Aorta (tissue), 5 donors: ENCODE measurements at regions of chr2 and their contacts with region 1.

Region 1: GRCh38 chr2:47906157-47907038 is at the start of gene FBXO11:
- DNase-seq: peak; percentile 96 to 98
- ATAC-seq: peak; percentile 96
- H3K4me3 ChIP-seq: peak within 1 kb of the TSS; percentile 98 to 99
- H3K27ac ChIP-seq: peak within 1 kb of the TSS; percentile 80 to 99
- H3K4me1 ChIP-seq: no peaks in the 10 kb centered on the region
- H3K27me3 ChIP-seq: no peaks in the 10 kb centered on the region
- total RNA-seq, gene FBXO11: 64.8 to 80.4 TPM

Region 2: DNA sequence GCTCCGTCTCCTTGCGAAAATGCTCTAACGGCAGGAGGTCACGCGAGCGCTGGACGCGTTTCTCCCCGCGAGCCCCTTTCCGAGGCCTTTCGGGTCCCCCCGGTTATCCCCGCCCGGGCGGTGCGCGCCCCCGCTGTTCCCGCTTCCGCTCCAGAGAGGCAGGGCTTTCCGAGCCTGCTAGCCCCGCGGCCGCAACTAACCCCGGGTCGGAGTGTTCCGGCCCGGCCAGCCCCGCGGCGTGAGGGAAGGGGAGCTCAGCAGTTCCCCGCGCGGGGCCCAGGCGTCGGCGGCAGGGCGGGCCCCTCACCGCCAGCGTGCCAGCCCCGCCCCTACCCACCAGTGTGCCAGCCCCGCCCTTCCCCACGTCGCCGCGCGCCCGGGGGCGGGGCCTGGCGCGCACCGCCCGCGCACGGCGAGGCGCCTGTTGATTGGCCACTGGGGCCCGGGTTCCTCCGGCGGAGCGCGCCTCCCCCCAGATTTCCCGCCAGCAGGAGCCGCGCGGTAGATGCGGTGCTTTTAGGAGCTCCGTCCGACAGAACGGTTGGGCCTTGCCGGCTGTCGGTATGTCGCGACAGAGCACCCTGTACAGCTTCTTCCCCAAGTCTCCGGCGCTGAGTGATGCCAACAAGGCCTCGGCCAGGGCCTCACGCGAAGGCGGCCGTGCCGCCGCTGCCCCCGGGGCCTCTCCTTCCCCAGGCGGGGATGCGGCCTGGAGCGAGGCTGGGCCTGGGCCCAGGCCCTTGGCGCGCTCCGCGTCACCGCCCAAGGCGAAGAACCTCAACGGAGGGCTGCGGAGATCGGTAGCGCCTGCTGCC is 123.5 kb before region 1 on chr2 and contains the start of gene MSH6:
- intact Hi-C with region 1: loop called (anchors 5 to 10 kb)
- DNase-seq: peak; percentile 93 to 96
- ATAC-seq: peak; percentile 97
- H3K4me3 ChIP-seq: peak within 1 kb of the TSS; percentile 73 to 87
- H3K27ac ChIP-seq: peak within 1 kb of the TSS in 1 of 2 donors; percentile 78
- H3K4me1 ChIP-seq: no peaks in the 10 kb centered on the region
- H3K27me3 ChIP-seq: no peaks in the 10 kb centered on the region
- total RNA-seq, gene MSH6: 29.4 to 38.3 TPM

Region 3: DNA sequence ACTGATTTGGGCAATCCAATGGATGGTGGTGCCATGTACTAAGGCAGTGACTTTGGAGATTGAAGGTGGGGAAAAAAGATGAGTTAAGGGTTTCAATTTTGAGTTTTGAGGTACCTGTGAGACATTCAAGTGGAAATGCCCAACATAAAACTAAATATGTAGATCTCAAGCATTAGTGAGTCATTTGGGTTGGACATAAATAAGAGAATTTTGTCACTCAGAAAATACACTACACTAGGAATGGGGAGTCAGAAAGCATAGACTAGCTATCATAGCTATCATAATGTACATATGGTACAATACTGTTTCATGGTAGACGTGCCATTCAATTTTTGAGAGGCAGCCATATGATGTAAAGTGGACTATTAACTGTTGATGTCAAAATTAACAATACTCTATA is 56.2 kb before region 1 on chr2:
- intact Hi-C with region 1: loop called in 1 of 2 experiments (anchors 10 kb)
- DNase-seq: no peak
- ATAC-seq: no peak
- H3K4me3 ChIP-seq: no peak overlapping the region
- H3K27ac ChIP-seq: no peak overlapping the region
- H3K4me1 ChIP-seq: no peaks in the 10 kb centered on the region
- H3K27me3 ChIP-seq: no peaks in the 10 kb centered on the region

Region 4: DNA sequence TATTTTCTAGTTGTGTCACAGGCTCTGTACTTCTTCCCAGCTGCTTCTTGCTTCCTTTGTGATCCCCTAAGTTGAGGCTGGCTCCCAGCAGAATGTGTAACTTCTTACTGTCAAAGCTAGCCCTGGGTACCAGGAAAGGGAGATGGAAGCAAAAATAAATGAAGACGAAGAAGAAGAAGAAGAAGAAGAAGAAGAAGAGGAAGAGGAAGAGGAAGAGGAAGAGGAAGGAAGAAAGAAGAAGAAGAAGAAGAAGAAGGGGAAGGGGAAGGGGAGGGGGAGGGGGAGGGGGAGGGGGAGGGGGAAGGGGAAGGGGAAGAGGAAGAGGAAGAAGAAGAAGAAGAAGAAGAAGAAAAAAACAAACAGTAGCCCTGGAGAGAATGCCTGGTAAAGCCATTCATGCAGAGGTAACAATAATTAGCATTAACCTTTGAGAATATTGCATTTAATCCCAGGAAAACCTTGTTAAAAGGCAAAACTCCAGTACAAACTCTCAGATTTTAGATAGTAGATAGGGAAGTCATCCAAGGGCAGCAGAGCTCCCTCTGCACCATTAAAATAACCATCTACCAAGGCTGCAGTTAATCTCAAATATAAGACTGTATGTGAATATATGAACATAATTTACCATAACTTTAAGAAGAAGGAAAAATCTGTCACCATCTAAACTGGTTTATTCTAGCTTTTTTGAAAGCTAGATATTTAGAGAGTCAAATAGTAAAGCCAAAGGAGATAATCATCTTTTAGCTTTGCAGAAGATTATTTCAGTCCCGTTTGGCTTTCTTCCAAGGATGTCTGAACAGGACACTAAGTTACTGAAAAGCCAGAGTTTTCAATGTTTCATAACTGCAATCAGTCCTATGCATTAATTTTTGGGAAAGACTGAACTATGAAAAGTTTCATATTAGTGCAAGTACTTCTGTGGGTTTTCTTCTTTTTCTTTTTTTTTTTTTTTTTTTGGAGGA is 44.2 kb after region 1 on chr2:
- intact Hi-C with region 1: no loop called
- DNase-seq: no peak
- ATAC-seq: no peak
- H3K4me3 ChIP-seq: no peak overlapping the region
- H3K27ac ChIP-seq: no peak overlapping the region
- H3K4me1 ChIP-seq: no peaks in the 10 kb centered on the region
- H3K27me3 ChIP-seq: no peaks in the 10 kb centered on the region